ENCODE measurements at regions of chr14 and their contacts with region 1.

Region 1: GRCh38 chr14:81220830-81221578 is at the start of gene GTF2A1:
- H3K4me3 Mint-ChIP-seq: peak within 1 kb of the TSS; percentile 94
- H3K27ac Mint-ChIP-seq: peak within 1 kb of the TSS; percentile 100
- H3K4me1 Mint-ChIP-seq: peaks cover 30% of the 10 kb centered on the region
- H3K27me3 Mint-ChIP-seq: no peaks in the 10 kb centered on the region

Region 2: GRCh38 chr14:80941241-80942182 is 279.5 kb before region 1 on chr14 and contains the start of gene CEP128:
- intact Hi-C with region 1: loop called (anchors 1 kb)
- H3K4me3 Mint-ChIP-seq: peak within 1 kb of the TSS; percentile 86
- H3K27ac Mint-ChIP-seq: peak within 1 kb of the TSS; percentile 82
- H3K4me1 Mint-ChIP-seq: peaks cover 21% of the 10 kb centered on the region
- H3K27me3 Mint-ChIP-seq: no peaks in the 10 kb centered on the region

Region 3: DNA sequence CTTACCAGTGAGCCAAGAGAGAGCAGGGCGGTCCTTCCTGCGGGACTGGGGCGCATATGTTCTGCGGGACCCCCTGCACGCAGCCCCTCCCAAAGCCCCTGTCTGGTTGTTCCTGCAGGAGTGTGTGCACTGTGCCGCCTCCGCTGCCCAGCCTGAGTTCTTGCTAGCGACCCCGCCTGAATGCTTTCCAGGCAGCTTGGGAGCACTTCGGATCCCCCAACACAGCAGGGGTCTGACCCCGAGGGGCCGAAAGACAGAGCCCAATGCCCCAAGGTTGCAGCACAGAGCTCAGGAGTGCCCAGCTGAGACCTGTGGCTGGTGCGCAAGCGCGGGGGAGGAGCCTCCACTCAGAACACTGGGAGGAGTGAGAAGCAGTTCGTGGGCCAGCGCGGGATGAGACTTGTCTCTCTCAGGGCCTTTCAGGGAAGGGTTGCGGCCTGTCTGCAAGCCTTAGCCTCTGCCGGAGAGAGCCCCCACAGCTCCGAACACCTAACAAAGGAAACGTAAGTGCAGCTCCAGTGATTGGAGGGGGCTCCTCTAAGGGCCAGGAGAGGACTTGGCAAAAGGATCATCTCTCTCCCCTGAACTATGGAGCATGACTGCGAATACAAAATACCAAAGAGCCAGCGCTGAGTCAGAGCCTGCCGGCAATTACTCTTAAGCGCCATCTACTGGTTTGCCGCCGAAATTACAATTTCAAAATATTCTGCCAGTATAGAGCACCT is 50.7 kb before region 1 on chr14:
- intact Hi-C with region 1: loop called (anchors 2 kb)
- H3K4me3 Mint-ChIP-seq: peak overlapping the region; percentile 83
- H3K27ac Mint-ChIP-seq: peak overlapping the region; percentile 99
- H3K4me1 Mint-ChIP-seq: peaks cover 61% of the 10 kb centered on the region
- H3K27me3 Mint-ChIP-seq: no peaks in the 10 kb centered on the region